Left lung (tissue), 14 donors: ENCODE measurements at regions of chr2 and their contacts with region 1.

Region 1: GRCh38 chr2:64243081-64244036 is 99.1 kb upstream of the PELI1 start:
- DNase-seq: no peak
- ATAC-seq: no peak
- H3K4me3 ChIP-seq: no peak overlapping the region
- H3K27ac ChIP-seq: no peak overlapping the region
- H3K4me1 ChIP-seq: no peaks in the 10 kb centered on the region
- H3K27me3 ChIP-seq: no peaks in the 10 kb centered on the region
- CTCF ChIP-seq: no peak

Region 2: GRCh38 chr2:63617366-63617765 is 626.0 kb before region 1 on chr2:
- intact Hi-C with region 1: no loop called
- DNase-seq: no peak
- ATAC-seq: no peak
- H3K4me3 ChIP-seq: no peak overlapping the region
- H3K27ac ChIP-seq: no peak overlapping the region
- H3K4me1 ChIP-seq: no peaks in the 10 kb centered on the region
- H3K27me3 ChIP-seq: no peaks in the 10 kb centered on the region
- CTCF ChIP-seq: no peak

Region 3: DNA sequence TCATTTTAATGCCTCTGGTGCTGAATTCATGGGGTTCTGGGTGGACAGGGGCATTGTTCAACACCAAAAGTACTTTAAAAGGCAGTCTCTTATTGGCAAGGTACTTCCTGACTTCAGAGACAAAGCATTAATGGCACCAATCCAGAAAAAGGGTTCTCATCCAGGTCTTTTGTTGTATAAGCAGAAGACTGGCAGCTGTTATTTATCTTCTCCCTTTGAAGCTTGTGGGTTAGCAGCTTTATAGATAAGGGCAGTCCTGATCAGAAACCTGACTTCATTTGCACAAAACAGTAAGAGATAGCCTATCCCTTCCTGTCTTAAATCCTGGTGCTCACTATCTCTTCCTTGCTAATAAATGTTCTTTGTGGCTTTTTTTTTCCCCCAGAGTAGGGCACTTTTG is 292.9 kb before region 1 on chr2:
- intact Hi-C with region 1: no loop called
- DNase-seq: no peak
- ATAC-seq: no peak
- H3K4me3 ChIP-seq: no peak overlapping the region
- H3K27ac ChIP-seq: no peak overlapping the region
- H3K4me1 ChIP-seq: no peaks in the 10 kb centered on the region
- H3K27me3 ChIP-seq: no peaks in the 10 kb centered on the region
- CTCF ChIP-seq: no peak

Region 4: DNA sequence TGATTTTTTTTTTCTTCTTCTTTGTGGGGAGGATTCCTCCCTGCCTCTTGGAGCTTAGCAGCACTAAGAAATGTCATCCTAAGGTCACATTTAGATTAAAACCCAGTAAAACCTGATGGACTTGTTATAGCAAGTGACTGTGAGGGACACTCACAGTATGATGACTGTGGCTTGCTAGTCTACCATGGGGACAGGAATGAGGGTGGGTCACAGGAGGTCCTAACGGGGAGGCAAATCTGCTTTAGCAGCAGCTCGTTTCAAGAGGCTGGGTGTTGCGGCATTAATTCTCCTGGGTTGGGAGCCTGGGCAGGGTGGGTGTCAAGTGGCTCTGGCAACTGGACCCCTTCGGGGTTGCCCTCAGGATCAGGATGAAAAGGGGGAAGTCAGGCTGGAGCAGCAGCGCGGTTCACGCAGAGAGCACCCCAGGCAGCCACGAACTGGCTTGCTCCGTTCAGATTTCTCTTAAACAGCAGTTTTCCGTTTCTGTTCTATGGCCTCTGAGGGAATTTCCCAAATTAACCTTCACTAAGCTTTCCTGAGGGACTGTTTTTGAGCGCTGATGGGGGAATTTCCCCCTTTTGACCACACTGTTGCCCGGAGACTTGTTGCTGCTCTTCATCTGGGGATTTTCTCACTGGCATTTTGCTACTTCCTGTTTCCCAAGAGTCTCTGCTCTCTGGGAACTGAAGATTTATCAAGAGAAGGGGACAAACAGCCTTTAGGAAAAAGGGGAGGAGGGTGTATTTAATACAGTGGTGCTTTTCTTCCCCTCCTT is 39.3 kb before region 1 on chr2:
- intact Hi-C with region 1: loop called in 1 of 2 experiments (anchors 2 kb)
- DNase-seq: peak; percentile 59 to 86 (median 68)
- ATAC-seq: peak; percentile 51
- H3K4me3 ChIP-seq: peak overlapping the region in 1 of 2 donors; percentile 16
- H3K27ac ChIP-seq: peak overlapping the region; percentile 83 to 90
- H3K4me1 ChIP-seq: peaks cover 26 to 31% of the 10 kb centered on the region in 2 donors
- H3K27me3 ChIP-seq: no peaks in the 10 kb centered on the region
- CTCF ChIP-seq: no peak